CD4-positive, alpha-beta memory T cell (primary cell): ENCODE measurements at regions of chr6 and their contacts with region 1.

Region 1: GRCh38 chr6:152124429-152125074 is 317.1 kb downstream of the ESR1 start:
- DNase-seq: peak in 4 of 5 donors; percentile 18 to 35 (median 29)
- H3K4me3 ChIP-seq: no peak overlapping the region
- H3K4me3 Mint-ChIP-seq: no peak overlapping the region
- H3K27ac ChIP-seq: no peak overlapping the region
- H3K27ac Mint-ChIP-seq: peak overlapping the region in 4 of 7 donors; percentile 22 to 67 (median 52)
- H3K4me1 ChIP-seq: no peaks in the 10 kb centered on the region
- H3K4me1 Mint-ChIP-seq: peaks cover 0 to 2% (median 0%) of the 10 kb centered on the region in 4 donors
- H3K27me3 ChIP-seq: no peaks in the 10 kb centered on the region
- H3K27me3 Mint-ChIP-seq: no peaks in the 10 kb centered on the region

Region 2: DNA sequence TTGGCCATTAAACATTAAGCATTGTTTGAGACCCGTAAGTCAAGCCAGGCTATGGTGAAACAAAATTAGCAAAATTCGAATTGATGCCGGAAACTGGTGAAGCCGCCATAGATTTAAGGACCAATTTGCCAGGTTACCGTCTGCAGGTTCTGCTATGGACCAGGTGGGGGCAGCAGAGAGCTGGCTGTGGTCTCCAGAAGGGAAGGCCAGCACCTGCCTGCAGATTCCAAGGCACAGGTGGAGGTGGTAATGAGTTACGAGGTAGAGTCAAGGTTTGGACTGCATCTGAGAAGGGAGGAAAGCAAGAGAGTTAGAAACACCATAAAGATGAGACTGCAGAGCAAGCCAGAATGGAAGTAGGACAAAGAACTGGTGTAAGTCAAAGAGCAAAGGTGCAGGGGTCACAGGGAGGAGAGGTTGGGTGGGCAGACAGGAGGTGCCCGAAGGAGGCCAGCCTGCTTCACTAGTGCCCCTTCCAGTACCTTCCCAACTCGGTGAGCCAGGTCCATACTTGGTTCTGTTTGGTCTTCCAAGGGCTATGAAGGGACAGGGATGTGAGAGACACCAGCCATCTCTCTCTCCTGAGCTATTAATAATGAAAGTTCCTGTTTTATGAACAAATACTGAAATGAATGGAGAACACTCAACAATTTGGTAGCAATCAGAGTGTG is 448.7 kb before region 1 on chr6:
- CTCF ChIA-PET with region 1: interaction called, 13 read pairs
- POLR2A ChIA-PET with region 1: no interaction called
- intact Hi-C with region 1: no loop called
- DNase-seq: peak; percentile 46 to 57 (median 48)
- H3K4me3 ChIP-seq: no peak overlapping the region
- H3K4me3 Mint-ChIP-seq: no peak overlapping the region
- H3K27ac ChIP-seq: no peak overlapping the region
- H3K27ac Mint-ChIP-seq: no peak overlapping the region
- H3K4me1 ChIP-seq: no peaks in the 10 kb centered on the region
- H3K4me1 Mint-ChIP-seq: peaks cover 0 to 2% (median under 1%) of the 10 kb centered on the region in 4 donors
- H3K27me3 ChIP-seq: no peaks in the 10 kb centered on the region
- H3K27me3 Mint-ChIP-seq: peaks cover 1 to 4% of the 10 kb centered on the region in 2 donors

Region 3: GRCh38 chr6:151765444-151765886 is 359.1 kb before region 1 on chr6:
- CTCF ChIA-PET with region 1: interaction called, 5 read pairs
- POLR2A ChIA-PET with region 1: no interaction called
- intact Hi-C with region 1: loop called (anchors 1 kb)
- DNase-seq: peak in 4 of 5 donors; percentile 35 to 43 (median 38)
- H3K4me3 ChIP-seq: no peak overlapping the region
- H3K4me3 Mint-ChIP-seq: no peak overlapping the region
- H3K27ac ChIP-seq: no peak overlapping the region
- H3K27ac Mint-ChIP-seq: no peak overlapping the region
- H3K4me1 ChIP-seq: no peaks in the 10 kb centered on the region
- H3K4me1 Mint-ChIP-seq: peaks cover 7 to 13% (median 11%) of the 10 kb centered on the region in 4 donors
- H3K27me3 ChIP-seq: no peaks in the 10 kb centered on the region
- H3K27me3 Mint-ChIP-seq: no peaks in the 10 kb centered on the region

Region 4: DNA sequence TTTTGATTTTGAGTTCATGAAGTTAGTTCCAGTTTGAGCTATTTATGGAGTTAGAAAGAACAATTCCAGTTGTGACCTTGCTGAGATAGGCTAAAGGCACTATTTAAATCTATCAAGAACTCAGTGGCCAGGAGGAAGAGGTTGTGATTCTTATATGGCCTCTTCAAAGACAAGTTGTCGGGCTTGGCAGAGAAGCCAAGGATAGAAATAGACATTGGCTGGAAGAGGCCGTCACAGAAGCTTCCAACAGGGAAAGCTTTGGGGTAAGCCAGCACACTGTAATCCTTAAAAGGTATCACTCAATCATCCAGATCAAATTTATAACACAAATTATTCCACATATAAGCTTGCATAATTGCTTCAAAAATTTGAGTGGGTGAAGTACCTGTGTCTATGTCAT is 226.6 kb after region 1 on chr6:
- CTCF ChIA-PET with region 1: no interaction called
- POLR2A ChIA-PET with region 1: no interaction called
- intact Hi-C with region 1: no loop called
- DNase-seq: no peak
- H3K4me3 ChIP-seq: no peak overlapping the region
- H3K4me3 Mint-ChIP-seq: no peak overlapping the region
- H3K27ac ChIP-seq: no peak overlapping the region
- H3K27ac Mint-ChIP-seq: no peak overlapping the region
- H3K4me1 ChIP-seq: no peaks in the 10 kb centered on the region
- H3K4me1 Mint-ChIP-seq: no peaks in the 10 kb centered on the region
- H3K27me3 ChIP-seq: no peaks in the 10 kb centered on the region
- H3K27me3 Mint-ChIP-seq: peaks cover 0 to 2% of the 10 kb centered on the region in 2 donors